ENCODE measurements at regions of chr17 and their contacts with region 1.

Region 1: DNA sequence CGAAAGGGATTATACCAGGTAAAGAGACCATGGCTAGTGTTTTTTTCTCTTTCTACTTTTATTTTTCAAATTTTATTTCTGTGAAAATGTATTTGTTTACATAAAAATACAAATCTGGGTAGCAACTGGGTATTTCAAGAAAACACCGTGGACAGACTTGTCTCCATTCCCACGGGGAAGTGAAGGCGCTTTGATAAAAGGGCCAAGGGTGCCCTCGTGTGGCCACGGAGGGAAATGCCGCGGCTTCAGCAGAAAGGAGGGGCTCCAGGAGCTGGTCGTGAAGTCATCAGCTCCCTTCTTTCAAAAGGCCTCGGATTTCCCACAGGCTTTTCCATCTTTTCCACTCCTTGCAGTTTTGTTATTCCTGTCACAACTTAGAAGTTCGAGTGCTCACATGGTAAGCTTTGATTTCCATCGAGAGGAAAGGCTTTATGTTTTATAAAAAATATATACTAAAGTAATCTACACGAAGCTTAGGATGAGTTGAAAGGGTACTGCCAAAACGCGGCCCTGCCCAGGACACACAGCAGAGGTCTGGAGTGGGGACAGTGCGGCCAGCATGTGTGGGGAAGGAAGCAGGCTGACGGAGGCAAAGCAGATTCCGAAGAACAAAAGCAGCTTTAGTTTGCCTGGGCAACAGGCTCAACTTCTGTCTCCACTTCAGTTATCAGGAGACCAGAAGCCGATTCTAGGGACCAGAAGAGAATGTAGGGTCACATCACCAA is 15.3 kb upstream of the MNT start:
- DNase-seq: peak; percentile 94
- H3K4me3 ChIP-seq: no peak overlapping the region
- H3K27ac ChIP-seq: peak overlapping the region; percentile 32
- H3K4me1 ChIP-seq: no peaks in the 10 kb centered on the region
- H3K27me3 ChIP-seq: no peaks in the 10 kb centered on the region
- CTCF ChIP-seq: peak; percentile 88 to 92
- POLR2A ChIP-seq: no peak

Region 2: GRCh38 chr17:2336215-2336851 is 79.8 kb before region 1 on chr17 and contains the start of gene TSR1:
- CTCF ChIA-PET with region 1: interaction called, 15 read pairs
- POLR2A ChIA-PET with region 1: no interaction called
- dilution Hi-C with region 1: no loop called
- intact Hi-C with region 1: no loop called
- DNase-seq: peak; percentile 92
- H3K4me3 ChIP-seq: peak within 1 kb of the TSS; percentile 56 to 85 (median 72)
- H3K27ac ChIP-seq: peak within 1 kb of the TSS; percentile 26
- H3K4me1 ChIP-seq: peaks cover 16% of the 10 kb centered on the region
- H3K27me3 ChIP-seq: no peaks in the 10 kb centered on the region
- CTCF ChIP-seq: peak in 1 of 2 donors; percentile 30
- POLR2A ChIP-seq: peak; percentile 95
- total RNA-seq, gene TSR1: 35.0 and 39.9 TPM in 2 replicates

Region 3: DNA sequence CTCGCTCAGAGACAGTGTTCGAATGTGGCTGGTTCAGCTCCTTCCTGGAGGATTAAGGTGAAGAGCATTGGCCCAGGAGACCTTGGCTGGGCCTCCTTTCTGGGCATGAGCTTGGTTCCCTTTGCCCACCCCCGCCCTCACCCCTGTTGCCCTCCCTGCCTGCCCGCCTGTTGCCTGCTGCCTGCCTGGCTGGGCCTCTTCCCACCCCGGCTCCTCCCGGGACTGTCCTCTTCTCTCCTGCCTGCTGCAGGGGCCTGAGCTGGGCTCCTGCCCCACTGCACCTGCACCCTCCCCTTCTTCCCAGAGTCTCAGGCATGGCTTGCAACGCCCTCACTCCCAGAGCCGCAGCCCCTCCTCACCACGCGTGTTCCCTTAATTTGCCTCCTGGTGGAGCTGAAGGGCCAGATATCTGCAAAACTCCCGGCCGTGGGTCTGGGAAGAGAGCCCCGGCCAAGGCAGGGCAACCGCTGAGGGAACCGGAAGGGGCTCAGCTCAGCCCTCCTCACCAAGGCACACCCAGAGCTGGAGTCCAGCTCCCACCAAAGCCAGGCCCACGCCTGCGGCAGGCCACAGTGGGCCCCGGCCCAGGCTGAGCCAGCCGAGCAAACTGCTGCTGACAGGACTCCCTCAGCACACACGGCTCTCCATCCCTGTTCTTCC is 46.5 kb before region 1 on chr17:
- CTCF ChIA-PET with region 1: interaction called, 909 read pairs
- POLR2A ChIA-PET with region 1: no interaction called
- dilution Hi-C with region 1: no loop called
- intact Hi-C with region 1: loop called (anchors 1 kb)
- DNase-seq: no peak
- H3K4me3 ChIP-seq: no peak overlapping the region
- H3K27ac ChIP-seq: no peak overlapping the region
- H3K4me1 ChIP-seq: peaks cover 6% of the 10 kb centered on the region
- H3K27me3 ChIP-seq: no peaks in the 10 kb centered on the region
- CTCF ChIP-seq: peak in 1 of 2 donors; percentile 2
- POLR2A ChIP-seq: no peak

Region 4: DNA sequence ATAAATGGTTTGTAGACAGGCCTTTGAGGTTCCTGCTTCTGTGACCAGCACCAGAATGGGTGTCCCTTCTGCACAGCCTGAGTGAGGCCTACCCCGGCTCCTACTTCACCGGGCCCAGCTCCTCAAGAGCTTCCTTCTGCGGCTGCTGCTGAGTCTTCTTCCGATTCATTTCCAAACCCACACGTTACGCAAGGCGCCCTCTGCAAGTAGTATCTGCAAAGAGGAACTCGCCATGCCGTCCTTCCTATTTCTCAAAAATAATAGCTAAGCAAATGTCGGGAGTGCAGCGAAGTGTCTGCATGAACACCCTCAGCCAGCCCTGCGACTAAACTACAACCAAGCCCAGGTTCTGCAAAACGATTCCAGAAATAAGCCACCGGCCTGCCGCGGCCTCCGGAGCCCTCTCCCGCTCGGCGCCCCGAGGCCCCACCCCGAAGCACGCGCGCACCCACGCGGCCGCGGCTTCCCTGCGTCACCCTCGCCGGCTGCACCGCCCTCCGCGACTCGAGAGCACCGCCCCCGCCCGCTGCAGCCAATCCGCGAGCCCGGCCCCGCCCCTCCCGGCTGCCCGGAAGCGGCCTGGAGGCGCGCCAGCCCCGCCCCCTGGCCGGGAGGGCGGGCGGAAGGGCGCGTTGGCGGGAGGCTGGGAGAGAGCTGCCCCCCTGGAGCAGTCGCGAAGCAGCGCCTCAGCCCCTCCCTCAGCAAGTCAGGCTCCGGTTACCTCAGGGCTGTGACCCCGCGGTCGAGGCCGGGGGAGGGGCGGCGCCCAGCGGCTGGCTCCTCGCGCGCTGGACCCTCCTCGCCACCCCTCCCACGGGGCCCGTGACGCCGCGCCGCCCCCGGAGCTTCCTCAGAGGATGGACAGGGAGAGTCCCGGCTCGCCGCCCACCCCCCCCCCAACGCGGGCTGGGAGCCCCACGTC is 23.7 kb before region 1 on chr17:
- CTCF ChIA-PET with region 1: interaction called, 909 read pairs
- POLR2A ChIA-PET with region 1: no interaction called
- dilution Hi-C with region 1: no loop called
- intact Hi-C with region 1: no loop called
- DNase-seq: peak; percentile 95
- H3K4me3 ChIP-seq: peak overlapping the region; percentile 3 to 76 (median 52)
- H3K27ac ChIP-seq: peak overlapping the region; percentile 92
- H3K4me1 ChIP-seq: peaks cover 34% of the 10 kb centered on the region
- H3K27me3 ChIP-seq: no peaks in the 10 kb centered on the region
- CTCF ChIP-seq: no peak
- POLR2A ChIP-seq: peak; percentile 63

Region 5: GRCh38 chr17:2672026-2672425 is 255.9 kb after region 1 on chr17:
- CTCF ChIA-PET with region 1: interaction called, 4 read pairs
- POLR2A ChIA-PET with region 1: no interaction called
- dilution Hi-C with region 1: no loop called
- intact Hi-C with region 1: loop called (anchors 10 kb)
- DNase-seq: no peak
- H3K4me3 ChIP-seq: no peak overlapping the region
- H3K27ac ChIP-seq: no peak overlapping the region
- H3K4me1 ChIP-seq: no peaks in the 10 kb centered on the region
- H3K27me3 ChIP-seq: no peaks in the 10 kb centered on the region
- CTCF ChIP-seq: no peak
- POLR2A ChIP-seq: no peak

Measured in endothelial cell of umbilical vein (primary cell).